GM12878 (cell line): ENCODE measurements at regions of chr17 and their contacts with region 1.

Region 1: DNA sequence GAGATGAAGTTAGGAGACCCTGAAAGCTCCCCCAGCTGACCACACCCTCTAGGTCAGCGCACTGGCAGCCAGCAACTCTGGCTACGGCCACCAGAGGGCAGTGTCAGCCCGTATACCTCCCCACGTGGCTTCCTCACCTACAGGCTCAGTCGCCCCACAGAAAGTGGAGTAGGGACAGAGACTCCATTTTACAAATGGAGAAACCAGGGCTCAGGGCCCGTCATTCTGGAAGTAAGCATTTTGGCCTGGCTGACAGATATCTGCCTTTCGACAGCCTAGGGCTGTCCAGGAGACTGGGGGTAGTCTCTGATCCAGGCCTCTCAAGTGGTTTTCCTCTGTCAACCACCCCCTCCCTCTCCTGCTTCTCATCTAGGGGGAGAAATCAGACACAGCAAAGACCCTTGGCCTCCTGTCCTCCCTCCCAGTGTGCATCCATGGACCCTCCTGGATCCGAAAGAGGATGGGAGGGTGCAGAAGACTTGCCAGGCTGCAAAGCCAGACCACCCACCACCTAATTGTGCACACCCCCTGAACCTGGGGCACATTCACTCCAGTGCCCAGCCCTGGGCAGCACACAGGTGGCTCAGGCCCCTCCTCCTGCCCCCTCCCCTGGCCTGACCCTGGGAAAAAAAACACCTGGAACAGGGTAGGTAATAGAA is 3.8 kb upstream of the HAP1 start:
- DNase-seq: peak; percentile 44
- ATAC-seq: peak; percentile 99
- H3K4me3 ChIP-seq: no peak overlapping the region
- H3K27ac ChIP-seq: no peak overlapping the region
- H3K4me1 ChIP-seq: peaks cover 3% of the 10 kb centered on the region; the same call in 1 of the 2 replicates
- H3K27me3 ChIP-seq: peaks cover 8% of the 10 kb centered on the region in 2 experiments; a peak in 3 of 4 replicates
- CTCF ChIP-seq: peak; percentile 97 to 98 (median 97); a peak in 5 of 6 replicates
- EP300 ChIP-seq: no peak
- POLR2A ChIP-seq: no peak
- RAD21 ChIP-seq: peak; percentile 97

Region 2: GRCh38 chr17:41801374-41802271 is 63.4 kb after region 1 on chr17:
- CTCF ChIA-PET with region 1: interaction called, 25 read pairs
- POLR2A ChIA-PET with region 1: no interaction called
- RAD21 ChIA-PET with region 1: interaction called, 12 read pairs
- SMC1A ChIA-PET with region 1: interaction called, 9 read pairs
- in situ Hi-C with region 1: loop called (anchors 5 kb)
- intact Hi-C with region 1: loop called (anchors 1 kb)
- DNase-seq: no peak
- ATAC-seq: peak; percentile 95
- H3K4me3 ChIP-seq: no peak overlapping the region
- H3K27ac ChIP-seq: no peak overlapping the region
- H3K4me1 ChIP-seq: no peaks in the 10 kb centered on the region
- H3K27me3 ChIP-seq: no peaks in the 10 kb centered on the region
- CTCF ChIP-seq: peak; percentile 92 to 96 (median 95)
- EP300 ChIP-seq: no peak
- POLR2A ChIP-seq: no peak
- RAD21 ChIP-seq: peak; percentile 90

Region 3: GRCh38 chr17:41885733-41886132 is 147.5 kb after region 1 on chr17:
- CTCF ChIA-PET with region 1: interaction called, 3 read pairs
- POLR2A ChIA-PET with region 1: no interaction called
- RAD21 ChIA-PET with region 1: no interaction called
- SMC1A ChIA-PET with region 1: no interaction called
- in situ Hi-C with region 1: no loop called
- intact Hi-C with region 1: loop called (anchors 1 kb)
- DNase-seq: no peak
- ATAC-seq: no peak
- H3K4me3 ChIP-seq: no peak overlapping the region
- H3K27ac ChIP-seq: no peak overlapping the region
- H3K4me1 ChIP-seq: no peaks in the 10 kb centered on the region
- H3K27me3 ChIP-seq: no peaks in the 10 kb centered on the region
- CTCF ChIP-seq: peak; percentile 18 to 47 (median 33); a peak in 4 of 6 replicates
- EP300 ChIP-seq: no peak
- POLR2A ChIP-seq: no peak
- RAD21 ChIP-seq: peak; percentile 46

Region 4: DNA sequence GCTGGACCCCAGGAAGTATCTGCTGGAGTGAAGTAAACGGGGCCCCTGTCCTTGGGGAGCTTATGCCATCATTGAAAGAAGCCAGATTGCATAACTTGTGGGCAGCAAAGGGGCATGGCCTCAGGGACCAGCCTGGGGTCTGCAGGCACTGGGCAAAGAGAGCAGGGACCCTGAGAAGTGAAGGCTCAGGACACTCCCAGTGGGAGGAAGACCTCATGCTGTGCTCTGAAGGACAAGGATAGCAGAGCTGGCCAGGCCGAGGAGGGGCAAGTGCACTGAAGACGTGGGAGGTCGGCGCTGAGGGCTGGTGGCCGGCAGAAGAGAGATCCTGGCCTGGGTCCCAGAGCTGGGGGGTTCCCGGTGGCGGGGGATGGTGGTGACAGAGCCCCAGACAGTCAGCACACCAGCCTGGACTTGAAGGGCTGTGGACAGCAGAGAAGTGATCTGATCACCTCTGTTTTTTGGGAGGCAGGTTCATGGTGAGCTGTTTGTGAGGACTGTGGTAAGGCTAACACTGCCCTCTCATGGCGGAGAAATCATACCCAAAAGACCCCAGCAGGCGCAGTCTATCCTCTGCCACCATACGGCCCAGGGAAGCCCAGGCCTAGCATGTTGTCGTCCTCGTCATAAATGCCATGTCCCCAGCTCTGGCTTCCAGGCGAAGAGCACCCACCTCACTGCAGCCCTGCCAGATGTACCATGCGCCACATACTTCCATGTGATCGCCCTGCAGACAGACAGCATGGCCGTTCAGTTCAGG is 221.3 kb after region 1 on chr17:
- CTCF ChIA-PET with region 1: interaction called, 10 read pairs
- POLR2A ChIA-PET with region 1: no interaction called
- RAD21 ChIA-PET with region 1: no interaction called
- SMC1A ChIA-PET with region 1: interaction called, 3 read pairs
- in situ Hi-C with region 1: no loop called
- intact Hi-C with region 1: loop called (anchors 1 kb)
- DNase-seq: no peak
- ATAC-seq: peak; percentile 85
- H3K4me3 ChIP-seq: no peak overlapping the region
- H3K27ac ChIP-seq: no peak overlapping the region
- H3K4me1 ChIP-seq: no peaks in the 10 kb centered on the region
- H3K27me3 ChIP-seq: no peaks in the 10 kb centered on the region
- CTCF ChIP-seq: peak; percentile 32 to 48 (median 47); a peak in 4 of 6 replicates
- EP300 ChIP-seq: no peak
- POLR2A ChIP-seq: no peak
- RAD21 ChIP-seq: peak; percentile 50